ENCODE measurements at regions of chr15 and their contacts with region 1.

Region 1: DNA sequence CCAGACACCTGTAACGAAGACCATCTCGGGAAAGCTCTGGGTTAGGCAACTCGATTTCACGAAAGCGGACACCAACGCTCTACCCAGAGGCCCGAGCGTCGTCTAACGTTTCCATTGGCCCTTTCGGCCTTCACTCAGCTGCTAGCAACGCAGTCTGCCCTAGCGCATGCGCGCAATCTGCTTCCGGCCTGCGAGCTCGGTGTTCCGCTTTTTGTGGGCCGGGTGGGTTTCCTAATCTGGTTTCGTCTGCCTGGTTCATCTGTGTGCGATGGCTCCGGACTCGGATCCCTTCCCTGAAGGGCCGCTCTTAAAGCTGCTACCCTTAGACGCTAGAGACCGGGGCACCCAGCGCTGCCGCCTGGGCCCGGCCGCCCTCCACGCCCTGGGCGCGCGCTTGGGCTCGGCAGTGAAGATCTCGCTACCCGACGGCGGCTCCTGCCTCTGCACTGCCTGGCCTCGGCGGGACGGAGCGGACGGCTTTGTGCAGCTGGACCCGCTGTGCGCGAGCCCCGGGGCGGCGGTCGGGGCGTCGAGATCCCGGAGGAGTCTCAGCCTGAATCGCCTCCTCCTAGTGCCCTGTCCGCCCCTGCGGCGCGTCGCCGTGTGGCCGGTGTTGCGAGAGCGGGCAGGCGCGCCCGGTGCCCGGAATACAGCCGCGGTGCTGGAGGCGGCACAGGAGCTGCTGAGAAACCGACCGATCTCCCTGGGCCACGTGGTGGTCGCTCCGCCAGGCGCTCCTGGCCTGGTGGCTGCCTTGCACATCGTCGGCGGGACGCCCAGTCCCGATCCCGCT is 24.0 kb upstream of the GATM start:
- DNase-seq: peak; percentile 98
- H3K4me3 Mint-ChIP-seq: peak overlapping the region; percentile 97
- H3K27ac Mint-ChIP-seq: peak overlapping the region; percentile 84
- H3K4me1 Mint-ChIP-seq: peaks cover 37% of the 10 kb centered on the region
- H3K27me3 Mint-ChIP-seq: no peaks in the 10 kb centered on the region

Region 2: DNA sequence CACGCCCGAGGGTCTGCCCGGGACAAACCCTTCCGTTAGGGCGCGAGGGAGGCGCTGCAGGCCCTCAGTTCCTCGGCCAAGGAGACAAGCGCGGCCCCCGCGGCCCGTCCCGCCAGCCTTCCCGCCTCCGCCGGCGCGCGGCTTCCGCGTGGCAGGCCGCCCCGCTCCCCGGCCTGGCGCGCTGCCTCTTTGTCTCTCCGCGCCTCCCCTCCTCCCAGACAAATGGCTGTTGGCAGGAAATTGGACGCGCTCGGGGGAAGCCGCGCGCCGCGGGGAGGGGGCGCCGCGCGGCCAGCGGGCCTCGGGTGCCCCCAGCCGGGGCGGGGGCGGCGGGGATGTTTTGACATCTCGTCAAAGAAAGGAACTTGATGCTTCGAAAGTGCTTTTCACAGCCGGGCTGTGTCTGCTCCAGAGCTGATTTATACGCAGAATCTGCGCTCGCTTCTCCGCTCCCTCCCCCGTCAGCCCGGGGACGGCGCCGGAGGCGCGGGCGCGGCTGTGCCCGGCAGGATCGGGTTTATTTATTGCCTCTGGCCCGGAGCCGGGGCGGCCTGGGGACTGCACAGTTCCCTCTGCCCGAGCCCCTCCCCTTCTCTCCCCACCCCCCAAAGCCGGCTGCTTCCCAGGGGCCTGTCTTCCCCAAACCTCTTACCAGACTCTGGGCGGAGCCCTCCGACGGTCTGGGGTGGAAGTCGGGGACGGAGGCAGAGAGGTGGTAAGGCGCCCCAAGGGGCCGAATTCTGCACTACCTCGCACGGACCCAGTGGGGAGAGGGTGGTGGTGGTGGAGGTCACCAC is 235.3 kb before region 1 on chr15:
- CTCF ChIA-PET with region 1: interaction called, 48 read pairs
- POLR2A ChIA-PET with region 1: interaction called, 5 read pairs
- DNase-seq: peak; percentile 87
- H3K4me3 Mint-ChIP-seq: peak overlapping the region; percentile 70
- H3K27ac Mint-ChIP-seq: peak overlapping the region; percentile 64
- H3K4me1 Mint-ChIP-seq: peaks cover 15% of the 10 kb centered on the region
- H3K27me3 Mint-ChIP-seq: no peaks in the 10 kb centered on the region

Region 3: DNA sequence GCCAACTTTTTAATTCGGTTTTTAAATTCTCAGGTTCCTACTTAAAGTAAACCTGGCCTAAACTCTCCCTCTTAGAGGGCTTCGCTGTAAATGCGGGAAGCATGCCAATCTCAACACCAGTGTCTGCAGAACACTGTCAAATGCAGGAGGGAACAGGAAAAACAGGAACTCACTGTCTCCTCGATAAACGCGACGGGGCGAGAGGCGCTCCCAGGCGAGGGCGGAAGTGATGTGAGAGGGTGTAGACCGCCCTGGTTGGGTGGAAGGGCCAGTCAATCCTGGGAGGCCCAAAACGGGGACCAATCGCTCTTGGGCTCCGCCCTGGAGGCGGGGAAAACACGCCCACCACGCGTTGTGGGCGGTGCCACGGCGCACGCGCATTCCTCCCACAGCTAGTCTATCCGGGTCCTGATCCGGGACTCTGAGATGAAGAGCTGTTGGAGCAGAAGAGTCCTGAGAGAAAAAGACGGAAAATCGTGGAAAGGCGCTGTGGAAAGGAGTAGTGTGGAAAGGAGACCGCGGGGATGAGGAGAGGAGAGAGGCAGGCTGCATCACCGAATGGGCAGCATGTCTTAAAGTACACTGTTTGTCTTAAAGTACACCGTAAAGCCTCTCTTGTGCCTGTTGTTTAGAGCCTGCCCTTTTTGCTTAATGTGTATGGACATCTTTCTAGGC is 123.2 kb before region 1 on chr15:
- CTCF ChIA-PET with region 1: interaction called, 3 read pairs
- POLR2A ChIA-PET with region 1: interaction called, 16 read pairs
- DNase-seq: peak; percentile 97
- H3K4me3 Mint-ChIP-seq: peak overlapping the region; percentile 87
- H3K27ac Mint-ChIP-seq: peak overlapping the region; percentile 62
- H3K4me1 Mint-ChIP-seq: peaks cover 22% of the 10 kb centered on the region
- H3K27me3 Mint-ChIP-seq: peaks cover 1% of the 10 kb centered on the region

Region 4: DNA sequence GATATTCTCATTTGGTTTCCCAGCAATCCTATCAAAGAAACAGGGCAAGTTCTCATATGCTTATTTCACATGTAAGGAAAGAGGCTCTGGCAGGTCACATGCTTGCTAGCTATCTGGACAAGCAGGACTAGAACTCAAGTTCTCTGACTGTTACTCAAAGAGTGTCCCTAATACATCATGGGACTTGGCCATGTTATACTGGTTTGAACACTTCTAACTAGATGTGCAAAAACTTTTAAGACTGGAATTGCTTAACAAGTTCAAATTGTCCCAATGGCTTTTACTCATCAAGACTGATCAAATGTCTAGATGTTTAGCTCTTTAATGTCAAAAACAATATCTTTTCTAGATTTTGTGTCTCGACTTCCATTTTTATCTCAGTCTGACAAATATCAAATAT is 30.8 kb before region 1 on chr15:
- CTCF ChIA-PET with region 1: no interaction called
- POLR2A ChIA-PET with region 1: no interaction called
- DNase-seq: no peak
- H3K4me3 Mint-ChIP-seq: no peak overlapping the region
- H3K27ac Mint-ChIP-seq: no peak overlapping the region
- H3K4me1 Mint-ChIP-seq: peaks cover under 1% of the 10 kb centered on the region
- H3K27me3 Mint-ChIP-seq: peaks cover 44% of the 10 kb centered on the region

Region 5: GRCh38 chr15:45414215-45414885 is 12.0 kb after region 1 on chr15:
- CTCF ChIA-PET with region 1: interaction called, 10 read pairs
- POLR2A ChIA-PET with region 1: interaction called, 31 read pairs
- DNase-seq: no peak
- H3K4me3 Mint-ChIP-seq: no peak overlapping the region
- H3K27ac Mint-ChIP-seq: peak overlapping the region; percentile 37
- H3K4me1 Mint-ChIP-seq: peaks cover 20% of the 10 kb centered on the region
- H3K27me3 Mint-ChIP-seq: no peaks in the 10 kb centered on the region

Region 6: DNA sequence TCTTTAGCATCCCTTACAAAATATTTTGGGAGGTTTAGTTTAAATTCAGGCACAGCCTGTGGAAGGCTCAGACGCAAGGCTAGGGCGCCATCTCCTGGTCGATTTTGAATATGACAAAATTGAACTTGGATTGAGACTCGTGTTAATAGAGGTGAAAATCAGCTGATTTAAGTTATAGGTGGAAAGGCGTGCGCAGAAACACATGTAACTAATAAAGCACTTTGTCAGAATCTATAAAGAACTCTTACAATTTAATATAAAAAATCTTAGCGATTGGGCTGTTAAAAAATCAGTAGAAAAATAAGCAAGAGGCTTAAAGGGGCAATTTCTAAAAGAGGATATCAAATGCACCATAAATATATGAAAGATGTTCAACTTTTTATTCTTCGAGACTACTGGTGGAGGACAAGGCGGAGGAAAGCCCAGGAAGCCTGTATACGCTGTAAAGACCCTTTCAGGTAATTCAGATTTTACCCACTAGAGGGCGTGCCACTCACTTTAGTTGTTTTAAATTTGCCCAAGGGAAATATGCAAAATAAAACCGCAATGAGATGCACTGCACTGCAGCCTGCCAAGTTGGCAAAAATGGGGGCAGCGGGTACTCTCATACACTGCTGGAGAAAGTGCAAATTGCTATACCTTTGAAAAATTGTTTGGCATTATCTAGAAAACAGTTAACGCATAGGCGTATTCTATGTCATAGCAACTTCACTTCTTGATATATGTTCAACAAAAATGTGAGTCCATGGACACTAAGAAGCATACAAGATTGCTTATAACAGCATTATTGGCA is 55.5 kb after region 1 on chr15:
- CTCF ChIA-PET with region 1: interaction called, 15 read pairs
- POLR2A ChIA-PET with region 1: interaction called, 9 read pairs
- DNase-seq: peak; percentile 78
- H3K4me3 Mint-ChIP-seq: peak overlapping the region; percentile 75
- H3K27ac Mint-ChIP-seq: peak overlapping the region; percentile 72
- H3K4me1 Mint-ChIP-seq: peaks cover 50% of the 10 kb centered on the region
- H3K27me3 Mint-ChIP-seq: peaks cover 2% of the 10 kb centered on the region

Region 7: GRCh38 chr15:45529613-45530012 is 127.3 kb after region 1 on chr15:
- CTCF ChIA-PET with region 1: no interaction called
- POLR2A ChIA-PET with region 1: no interaction called
- DNase-seq: no peak
- H3K4me3 Mint-ChIP-seq: no peak overlapping the region
- H3K27ac Mint-ChIP-seq: no peak overlapping the region
- H3K4me1 Mint-ChIP-seq: no peaks in the 10 kb centered on the region
- H3K27me3 Mint-ChIP-seq: peaks cover 26% of the 10 kb centered on the region

Measured in activated CD4-positive, alpha-beta memory T cell treated with anti-CD3 and anti-CD28 coated beads, Interleukin-2, amount 10 ng/mL, durations not matched to agents 7 days and 5 days (primary cell).